ENCODE measurements at regions of chr14 and their contacts with region 1.

Region 1: DNA sequence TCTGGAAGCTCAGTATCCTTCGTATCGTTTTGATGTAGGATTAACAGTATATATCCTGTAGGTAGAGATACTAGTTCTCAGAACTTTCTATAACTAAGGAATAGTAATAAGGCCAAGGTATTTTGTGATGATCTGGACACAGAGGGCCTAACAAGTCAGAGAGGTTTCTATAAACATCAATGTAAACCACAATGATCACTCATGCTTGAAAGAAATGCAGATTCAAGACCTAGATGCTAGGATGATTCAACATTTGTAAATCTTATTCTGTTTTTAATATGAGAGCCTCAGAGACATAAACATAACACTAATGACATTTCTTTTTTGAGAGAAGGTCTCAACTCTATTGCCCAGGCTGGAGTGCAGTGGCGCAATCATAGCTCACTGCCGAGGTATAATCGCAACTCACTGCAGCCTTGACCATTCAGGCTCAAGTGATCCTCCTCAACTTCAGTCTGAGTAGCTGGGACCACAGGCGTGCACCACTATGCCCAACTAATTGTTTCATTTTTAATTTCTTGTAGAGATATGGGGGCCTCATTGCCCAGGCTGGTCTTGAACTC is 16.2 kb downstream of the SUPT16H start:
- DNase-seq: no peak
- ATAC-seq: no peak
- H3K4me3 ChIP-seq: no peak overlapping the region
- H3K27ac ChIP-seq: no peak overlapping the region
- H3K4me1 ChIP-seq: peaks cover 0 to 3% of the 10 kb centered on the region in 2 donors
- H3K27me3 ChIP-seq: no peaks in the 10 kb centered on the region
- CTCF ChIP-seq: no peak

Region 2: GRCh38 chr14:21414137-21414631 is 46.5 kb after region 1 on chr14:
- intact Hi-C with region 1: loop called in 1 of 2 experiments (anchors 10 kb)
- DNase-seq: no peak
- ATAC-seq: no peak
- H3K4me3 ChIP-seq: no peak overlapping the region
- H3K27ac ChIP-seq: no peak overlapping the region
- H3K4me1 ChIP-seq: no peaks in the 10 kb centered on the region
- H3K27me3 ChIP-seq: no peaks in the 10 kb centered on the region
- CTCF ChIP-seq: no peak

Measured in left lung (tissue), 14 donors.